Psoas muscle (tissue), 8 donors: ENCODE measurements at regions of chr6 and their contacts with region 1.

Region 1: GRCh38 chr6:128339635-128340450 is 180.6 kb downstream of the PTPRK start:
- DNase-seq: no peak
- ATAC-seq: no peak
- H3K4me3 ChIP-seq: no peak overlapping the region
- H3K27ac ChIP-seq: no peak overlapping the region
- H3K4me1 ChIP-seq: peaks cover 16% of the 10 kb centered on the region
- H3K27me3 ChIP-seq: no peaks in the 10 kb centered on the region
- CTCF ChIP-seq: no peak

Region 2: GRCh38 chr6:126446248-126446647 is 1893.6 kb before region 1 on chr6:
- intact Hi-C with region 1: loop called in 1 of 2 experiments (anchors 5 kb)
- DNase-seq: no peak
- ATAC-seq: no peak
- H3K4me3 ChIP-seq: no peak overlapping the region
- H3K27ac ChIP-seq: no peak overlapping the region
- H3K4me1 ChIP-seq: no peaks in the 10 kb centered on the region
- H3K27me3 ChIP-seq: no peaks in the 10 kb centered on the region
- CTCF ChIP-seq: no peak

Region 3: GRCh38 chr6:127710668-127711067 is 629.2 kb before region 1 on chr6:
- intact Hi-C with region 1: no loop called
- DNase-seq: no peak
- ATAC-seq: no peak
- H3K4me3 ChIP-seq: no peak overlapping the region
- H3K27ac ChIP-seq: no peak overlapping the region
- H3K4me1 ChIP-seq: no peaks in the 10 kb centered on the region
- H3K27me3 ChIP-seq: no peaks in the 10 kb centered on the region
- CTCF ChIP-seq: no peak